ENCODE measurements at regions of chrX and their contacts with region 1.

Region 1: DNA sequence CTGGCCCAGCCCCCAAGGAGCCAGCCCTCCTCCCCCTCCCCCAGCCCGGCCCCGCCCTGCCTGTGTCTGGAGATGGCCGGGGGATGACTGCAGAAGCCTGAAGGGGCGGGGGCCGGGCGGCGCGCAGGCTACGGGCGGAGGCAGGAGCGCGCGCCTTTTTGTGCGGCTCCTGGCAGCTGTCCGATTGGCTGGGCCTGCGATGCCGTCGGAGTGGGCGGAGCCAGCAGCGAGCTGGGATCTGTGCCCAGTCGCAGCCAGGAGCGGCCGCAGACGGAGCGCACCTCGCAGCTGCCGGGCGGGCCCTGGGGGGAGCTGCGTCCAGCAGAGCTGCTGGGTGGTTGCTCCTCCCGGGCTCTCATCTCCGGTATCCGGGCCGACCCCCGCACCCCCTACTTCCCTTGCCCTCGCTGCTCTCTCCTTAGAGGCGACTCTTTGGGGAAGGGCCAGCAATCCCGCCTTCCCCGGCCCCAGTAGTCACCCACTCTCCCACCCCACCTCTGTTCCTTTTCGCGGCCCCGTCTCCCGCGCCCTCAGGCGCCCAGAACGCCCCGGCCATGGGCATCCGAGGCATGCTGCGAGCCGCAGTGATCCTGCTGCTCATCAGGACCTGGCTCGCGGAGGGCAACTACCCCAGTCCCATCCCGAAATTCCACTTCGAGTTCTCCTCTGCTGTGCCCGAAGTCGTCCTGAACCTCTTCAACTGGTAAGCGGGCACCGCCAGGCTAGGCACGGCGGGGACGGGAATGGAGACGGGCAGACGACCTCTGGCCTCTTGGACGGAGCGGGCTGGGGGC is at the start of gene GABRQ:
- DNase-seq: no peak
- H3K4me3 ChIP-seq: no peak within 1 kb of the TSS; the same call in 1 of the 2 replicates
- CTCF ChIP-seq: no peak

Region 2: DNA sequence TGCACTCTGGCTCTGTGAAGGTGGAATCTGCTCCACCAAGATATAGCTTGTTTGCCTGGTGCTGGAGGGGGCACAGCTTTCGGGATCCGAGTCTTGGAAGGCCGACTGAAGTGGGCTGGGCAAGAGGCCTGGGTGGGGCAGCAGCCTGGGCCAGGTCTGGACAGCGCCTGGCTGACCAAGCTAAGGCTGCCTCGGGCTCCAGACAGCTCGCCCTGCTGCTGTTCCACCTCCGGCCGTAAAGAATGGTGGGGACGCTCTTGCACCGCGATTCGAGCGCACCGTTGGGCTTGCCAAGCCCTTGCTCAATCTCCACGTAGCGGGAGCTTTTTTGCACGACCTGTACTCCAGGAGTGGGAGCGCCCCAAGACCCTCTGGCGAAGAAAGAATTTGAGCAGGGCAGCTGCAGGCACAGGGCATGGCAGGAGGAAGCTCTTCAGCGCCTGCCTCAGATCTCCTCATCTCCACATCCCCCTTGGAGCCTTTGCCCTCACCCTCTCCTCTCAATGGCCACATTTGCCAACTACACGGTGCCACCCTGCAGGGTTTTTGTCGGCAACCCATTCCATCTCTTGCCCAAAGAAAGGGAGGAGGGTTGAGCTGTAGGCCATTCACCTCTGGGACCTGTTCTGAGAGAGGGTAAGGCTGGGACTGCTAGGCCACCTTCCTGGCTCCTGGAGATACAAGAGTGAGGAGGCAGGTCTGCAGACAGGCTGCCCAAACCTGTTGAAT is 884.4 kb before region 1 on chrX:
- CTCF ChIA-PET with region 1: interaction called, 303 read pairs
- POLR2A ChIA-PET with region 1: interaction called, 3 read pairs
- DNase-seq: no peak
- H3K4me3 ChIP-seq: no peak overlapping the region
- CTCF ChIP-seq: peak; percentile 79

Region 3: DNA sequence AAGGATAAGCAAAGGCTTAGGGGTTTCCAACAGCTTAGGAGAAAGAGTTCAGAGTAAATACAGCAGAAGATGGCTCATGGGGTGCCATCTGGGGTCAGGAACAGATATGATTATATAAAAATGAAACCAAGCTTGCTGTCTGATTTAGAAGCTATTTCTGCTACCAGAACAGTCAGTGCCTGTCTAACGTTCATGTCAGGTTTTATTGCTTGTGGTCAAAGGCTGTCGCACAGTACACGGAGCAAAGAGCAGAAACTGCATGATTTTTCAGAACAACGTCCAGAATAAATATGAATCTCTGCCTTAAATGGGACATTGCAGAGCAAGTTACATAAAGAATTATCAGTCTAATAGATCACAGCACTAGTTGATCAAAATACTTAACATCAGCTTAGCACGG is 175.4 kb after region 1 on chrX:
- CTCF ChIA-PET with region 1: interaction called, 39 read pairs
- POLR2A ChIA-PET with region 1: no interaction called
- DNase-seq: no peak
- H3K4me3 ChIP-seq: no peak overlapping the region
- CTCF ChIP-seq: no peak

Region 4: GRCh38 chrX:152821145-152821765 is 183.4 kb after region 1 on chrX:
- CTCF ChIA-PET with region 1: interaction called, 39 read pairs
- POLR2A ChIA-PET with region 1: no interaction called
- DNase-seq: no peak
- H3K4me3 ChIP-seq: no peak overlapping the region
- CTCF ChIP-seq: peak; percentile 50

Region 5: GRCh38 chrX:152926279-152926678 is 288.4 kb after region 1 on chrX:
- CTCF ChIA-PET with region 1: interaction called, 13 read pairs
- POLR2A ChIA-PET with region 1: no interaction called
- DNase-seq: peak; percentile 4
- H3K4me3 ChIP-seq: no peak overlapping the region
- CTCF ChIP-seq: peak; percentile 50

Measured in AG04449 (cell line).